IMR-90 (cell line): ENCODE measurements at regions of chr11 and their contacts with region 1.

Region 1: GRCh38 chr11:68584097-68584496 is 100.2 kb upstream of the GAL start:
- DNase-seq: peak; percentile 4
- ATAC-seq: no peak
- H3K4me3 ChIP-seq: no peak overlapping the region
- H3K27ac ChIP-seq: no peak overlapping the region
- H3K4me1 ChIP-seq: peaks cover 7% of the 10 kb centered on the region
- H3K27me3 ChIP-seq: no peaks in the 10 kb centered on the region
- CTCF ChIP-seq: peak; percentile 29
- POLR2A ChIP-seq: no peak
- RAD21 ChIP-seq: no peak

Region 2: DNA sequence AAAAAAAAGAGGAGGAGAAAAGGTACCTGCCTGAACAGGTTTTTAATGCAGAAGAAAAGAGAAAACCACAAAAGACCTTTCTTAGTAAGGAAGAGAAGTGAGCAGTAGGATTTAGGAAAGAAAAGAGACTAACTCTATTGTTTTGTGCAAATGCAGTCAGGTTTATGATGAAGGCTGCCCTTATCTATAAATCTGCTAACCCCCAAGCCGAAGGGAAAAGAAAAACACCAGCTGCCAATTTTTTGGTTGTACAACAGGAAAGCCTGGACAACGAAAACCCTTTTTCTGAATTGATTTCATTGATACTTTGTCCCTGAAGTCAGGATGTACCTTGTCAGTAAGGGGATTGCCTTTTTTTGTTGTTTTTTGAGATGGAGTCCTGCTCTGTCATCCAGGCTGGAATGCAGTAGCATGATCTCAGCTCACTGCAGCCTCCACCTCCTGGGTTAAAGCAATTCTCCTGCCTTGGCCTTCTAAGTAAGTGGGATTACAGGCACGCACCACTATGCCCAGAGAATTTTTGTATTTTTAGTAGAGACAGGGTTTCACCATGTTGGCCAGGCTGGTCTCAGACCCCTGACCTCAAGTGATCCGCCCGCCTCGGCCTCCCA is 1251.9 kb before region 1 on chr11:
- CTCF ChIA-PET with region 1: no interaction called
- POLR2A ChIA-PET with region 1: no interaction called
- dilution Hi-C with region 1: no loop called
- in situ Hi-C with region 1: no loop called
- intact Hi-C with region 1: no loop called
- DNase-seq: peak; percentile 22
- ATAC-seq: peak; percentile 56
- H3K4me3 ChIP-seq: no peak overlapping the region
- H3K27ac ChIP-seq: no peak overlapping the region
- H3K4me1 ChIP-seq: no peaks in the 10 kb centered on the region
- H3K27me3 ChIP-seq: no peaks in the 10 kb centered on the region
- CTCF ChIP-seq: no peak
- POLR2A ChIP-seq: no peak
- RAD21 ChIP-seq: no peak

Region 3: DNA sequence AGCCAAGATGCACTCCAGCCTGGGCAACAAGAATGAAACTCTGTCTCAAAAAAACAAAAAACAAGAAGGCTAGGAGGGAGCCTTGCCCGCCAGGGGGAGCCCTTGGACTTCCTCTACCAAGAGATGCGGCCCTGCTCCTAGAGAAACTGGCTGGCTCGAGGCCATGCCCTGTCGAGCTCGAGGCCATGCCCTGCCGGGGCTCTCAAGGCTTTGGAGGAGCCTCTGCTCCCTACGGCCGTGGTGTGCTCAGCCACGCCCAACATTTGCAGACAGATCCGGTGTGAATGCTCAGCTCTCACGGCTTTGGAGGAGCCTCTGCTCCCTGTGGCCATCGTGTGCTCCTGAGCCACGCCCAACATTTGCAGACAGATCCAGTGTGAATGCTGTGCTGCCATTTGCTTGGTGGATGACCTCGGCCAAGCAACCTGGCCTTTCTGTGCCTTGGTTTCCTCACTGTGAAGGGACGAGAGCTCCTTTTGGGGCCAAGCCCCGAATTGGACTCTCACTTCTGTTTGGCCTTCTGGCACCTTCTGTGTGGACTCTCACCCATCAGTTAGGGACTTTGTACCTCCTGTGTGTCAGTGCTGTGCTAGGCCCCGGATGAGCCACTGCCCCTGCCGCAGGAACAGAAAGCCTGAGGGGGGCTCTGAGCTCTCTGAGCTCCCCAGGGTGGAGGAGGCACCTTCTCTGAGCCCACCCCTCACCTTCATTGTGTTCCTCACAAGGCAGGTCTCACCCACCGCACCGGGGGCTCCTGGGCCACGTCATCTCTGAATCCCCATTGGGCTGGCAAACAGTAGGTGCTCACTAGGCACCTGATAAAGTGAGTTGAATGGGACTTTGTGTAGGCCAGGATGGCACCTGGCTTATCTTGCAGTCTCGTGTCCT is 326.4 kb before region 1 on chr11:
- CTCF ChIA-PET with region 1: no interaction called
- POLR2A ChIA-PET with region 1: no interaction called
- dilution Hi-C with region 1: no loop called
- in situ Hi-C with region 1: no loop called
- intact Hi-C with region 1: loop called (anchors 2 kb)
- DNase-seq: peak; percentile 83
- ATAC-seq: peak; percentile 74
- H3K4me3 ChIP-seq: no peak overlapping the region
- H3K27ac ChIP-seq: no peak overlapping the region
- H3K4me1 ChIP-seq: peaks cover 11% of the 10 kb centered on the region
- H3K27me3 ChIP-seq: no peaks in the 10 kb centered on the region
- CTCF ChIP-seq: peak; percentile 85
- POLR2A ChIP-seq: no peak
- RAD21 ChIP-seq: peak; percentile 82

Region 4: GRCh38 chr11:68757711-68758110 is 173.6 kb after region 1 on chr11:
- CTCF ChIA-PET with region 1: interaction called, 10 read pairs
- POLR2A ChIA-PET with region 1: no interaction called
- dilution Hi-C with region 1: no loop called
- in situ Hi-C with region 1: no loop called
- intact Hi-C with region 1: no loop called
- DNase-seq: no peak
- ATAC-seq: no peak
- H3K4me3 ChIP-seq: no peak overlapping the region
- H3K27ac ChIP-seq: no peak overlapping the region
- H3K4me1 ChIP-seq: no peaks in the 10 kb centered on the region
- H3K27me3 ChIP-seq: no peaks in the 10 kb centered on the region
- CTCF ChIP-seq: no peak
- POLR2A ChIP-seq: no peak
- RAD21 ChIP-seq: no peak